Pancreas (tissue), 10 donors: ENCODE measurements at regions of chr21 and their contacts with region 1.

Region 1: GRCh38 chr21:32770871-32771523 is 558 bp downstream of the PAXBP1 start:
- DNase-seq: peak; percentile 51 to 85 (median 63)
- ATAC-seq: peak; percentile 56 to 68 (median 62)
- H3K4me3 ChIP-seq: peak overlapping the region; percentile 68 to 82 (median 76)
- H3K27ac ChIP-seq: peak overlapping the region; percentile 79 to 90 (median 86)
- H3K4me1 ChIP-seq: peaks cover 3 to 25% (median 22%) of the 10 kb centered on the region in 3 donors
- H3K27me3 ChIP-seq: no peaks in the 10 kb centered on the region
- CTCF ChIP-seq: no peak

Region 2: GRCh38 chr21:32826329-32827167 is 55.6 kb after region 1 on chr21:
- intact Hi-C with region 1: loop called in 1 of 3 experiments (anchors 10 kb)
- DNase-seq: peak in 2 of 6 donors; percentile 26 to 48
- ATAC-seq: peak; percentile 63 to 98 (median 96)
- H3K4me3 ChIP-seq: no peak overlapping the region
- H3K27ac ChIP-seq: no peak overlapping the region
- H3K4me1 ChIP-seq: no peaks in the 10 kb centered on the region
- H3K27me3 ChIP-seq: no peaks in the 10 kb centered on the region
- CTCF ChIP-seq: peak in 3 of 4 donors; percentile 35 to 48 (median 46)

Region 3: GRCh38 chr21:33162436-33162951 is 391.5 kb after region 1 on chr21:
- intact Hi-C with region 1: no loop called
- DNase-seq: no peak
- ATAC-seq: no peak
- H3K4me3 ChIP-seq: no peak overlapping the region
- H3K27ac ChIP-seq: no peak overlapping the region
- H3K4me1 ChIP-seq: no peaks in the 10 kb centered on the region
- H3K27me3 ChIP-seq: no peaks in the 10 kb centered on the region
- CTCF ChIP-seq: no peak